ENCODE measurements at regions of chr3 and their contacts with region 1.

Region 1: GRCh38 chr3:100590114-100590839 is 19.1 kb upstream of the ADGRG7 start:
- DNase-seq: peak; percentile 73
- CTCF ChIP-seq: peak; percentile 77

Region 2: DNA sequence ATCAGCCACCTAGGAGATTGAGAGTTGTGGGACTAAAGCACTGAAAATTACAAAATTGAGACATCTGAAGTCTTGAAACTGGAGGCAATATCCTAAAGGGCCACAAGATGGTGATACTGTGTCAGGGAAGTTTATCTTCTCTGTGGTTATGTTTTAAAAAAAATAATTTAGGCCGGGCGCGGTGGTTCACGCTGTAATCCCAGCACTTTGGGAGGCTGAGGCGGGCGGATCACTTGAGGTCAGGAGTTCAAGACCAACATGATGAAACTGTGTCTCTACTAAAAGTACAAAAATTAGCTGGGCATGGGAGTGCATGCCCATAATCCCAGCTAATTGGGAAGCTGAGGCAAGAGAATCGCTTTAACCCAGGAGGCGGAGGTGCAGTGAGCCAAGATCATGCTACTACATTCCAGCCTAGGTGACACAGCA is 273.6 kb before region 1 on chr3:
- CTCF ChIA-PET with region 1: interaction called, 21 read pairs
- POLR2A ChIA-PET with region 1: no interaction called
- DNase-seq: peak; percentile 46
- CTCF ChIP-seq: peak; percentile 66

Region 3: GRCh38 chr3:100577382-100578002 is 12.8 kb before region 1 on chr3:
- CTCF ChIA-PET with region 1: interaction called, 34 read pairs
- POLR2A ChIA-PET with region 1: no interaction called
- DNase-seq: no peak
- CTCF ChIP-seq: no peak

Region 4: GRCh38 chr3:100603469-100603868 is 13.2 kb after region 1 on chr3:
- CTCF ChIA-PET with region 1: interaction called, 78 read pairs
- POLR2A ChIA-PET with region 1: no interaction called
- DNase-seq: peak; percentile 18
- CTCF ChIP-seq: peak; percentile 36